T-cell (primary cell): ENCODE measurements at regions of chr11 and their contacts with region 1.

Region 1: DNA sequence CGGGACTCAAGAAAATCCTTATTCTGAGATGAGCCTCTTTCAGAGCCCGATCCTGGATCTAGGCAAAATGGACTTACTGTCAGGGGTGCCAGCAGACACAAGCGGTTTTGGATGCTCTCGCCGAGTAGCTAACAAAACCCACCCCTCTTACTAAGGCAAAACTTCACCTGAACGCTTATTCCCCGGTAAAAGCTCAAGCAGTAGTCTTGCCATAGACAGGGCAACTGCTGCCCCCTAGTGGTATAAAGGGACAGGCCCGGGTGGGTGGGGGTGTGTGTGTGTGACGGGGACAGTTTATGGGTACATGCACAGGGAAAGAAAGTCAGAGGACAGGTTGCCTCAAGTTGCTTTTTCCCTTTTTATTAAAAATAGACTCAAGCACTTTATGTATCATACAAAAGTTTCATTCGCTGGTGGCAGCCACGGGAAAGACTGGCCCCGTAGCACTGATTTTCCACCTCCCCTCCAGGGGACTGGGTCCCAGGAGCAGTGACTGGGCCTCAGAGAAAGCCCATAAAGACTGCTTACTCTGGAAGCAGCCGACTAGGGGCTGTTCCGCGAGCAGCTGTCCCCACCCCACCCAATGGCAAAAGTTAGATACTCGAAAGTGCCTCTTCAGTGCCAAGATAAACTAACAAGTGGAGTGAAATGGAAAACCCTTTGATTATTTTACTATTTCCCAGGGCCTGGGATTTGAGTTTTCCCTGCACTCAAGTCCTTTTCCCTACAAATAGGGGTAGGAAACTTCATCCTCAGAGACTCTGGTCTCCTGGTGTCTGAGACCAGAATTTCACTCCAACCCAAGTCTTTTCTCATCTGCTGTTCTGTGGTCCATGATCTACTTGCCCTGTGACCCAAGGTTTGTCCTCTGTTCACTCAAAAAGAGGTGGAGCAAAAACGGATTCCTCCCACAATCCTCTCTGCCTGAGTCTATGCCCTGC is 4.7 kb downstream of the YPEL4 start:
- DNase-seq: peak; percentile 67 to 90 (median 82)
- ATAC-seq: peak; percentile 67 to 77 (median 67)
- H3K4me3 ChIP-seq: no peak overlapping the region
- H3K4me3 Mint-ChIP-seq: no peak overlapping the region
- H3K27ac ChIP-seq: no peak overlapping the region
- H3K27ac Mint-ChIP-seq: no peak overlapping the region
- H3K4me1 ChIP-seq: peaks cover 29 to 40% of the 10 kb centered on the region in 2 experiments
- H3K4me1 Mint-ChIP-seq: peaks cover 35 to 45% (median 38%) of the 10 kb centered on the region in 3 donors
- H3K27me3 ChIP-seq: peaks cover 9 to 56% of the 10 kb centered on the region in 2 experiments
- H3K27me3 Mint-ChIP-seq: peaks cover 32 to 57% of the 10 kb centered on the region in 2 donors

Region 2: DNA sequence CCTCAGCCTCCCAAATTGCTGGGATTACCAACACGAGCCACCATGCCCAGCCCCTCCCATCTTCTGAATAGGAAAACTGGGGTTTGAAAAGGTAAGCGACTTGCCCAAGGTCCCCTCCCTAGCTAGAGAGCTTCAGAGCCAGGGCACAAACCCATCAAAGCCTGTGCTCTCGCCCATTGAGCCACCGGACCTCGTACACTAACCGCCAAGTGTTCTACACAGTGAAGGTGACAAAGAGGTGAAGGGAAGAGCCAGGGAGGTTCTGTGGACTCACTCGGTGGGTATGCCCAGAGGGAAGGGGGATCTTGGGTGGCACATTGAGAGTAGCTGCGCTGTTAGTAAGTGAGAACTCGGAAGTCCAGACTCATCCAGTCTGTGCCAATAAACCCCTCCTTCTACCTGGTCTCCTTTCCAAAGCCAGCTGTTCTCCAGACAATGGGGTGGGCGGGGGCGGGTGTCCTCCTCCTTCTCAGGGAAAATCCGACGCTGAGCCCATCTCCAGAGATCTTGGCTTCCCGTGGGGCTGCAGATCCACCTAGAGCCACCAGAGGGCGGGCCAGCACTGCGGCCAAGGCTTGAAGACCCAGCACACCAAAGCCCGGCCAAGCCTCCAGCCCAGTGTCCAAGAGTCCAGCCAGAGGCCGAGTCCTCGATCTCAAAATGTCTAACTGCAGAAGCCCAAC is 187.9 kb before region 1 on chr11:
- CTCF ChIA-PET with region 1: interaction called, 10 to 15 read pairs
- POLR2A ChIA-PET with region 1: interaction called in 1 of 2 experiments, 8 read pairs
- DNase-seq: peak in 34 of 35 experiments; percentile 28 to 84 (median 60)
- ATAC-seq: peak; percentile 45 to 70 (median 58)
- H3K4me3 ChIP-seq: no peak overlapping the region
- H3K4me3 Mint-ChIP-seq: peak overlapping the region; percentile 50 to 97 (median 61)
- H3K27ac ChIP-seq: no peak overlapping the region
- H3K27ac Mint-ChIP-seq: no peak overlapping the region
- H3K4me1 ChIP-seq: peaks cover 14 to 41% of the 10 kb centered on the region in 2 experiments
- H3K4me1 Mint-ChIP-seq: peaks cover 23 to 32% (median 31%) of the 10 kb centered on the region in 3 donors
- H3K27me3 ChIP-seq: peaks cover 4 to 65% of the 10 kb centered on the region in 2 experiments
- H3K27me3 Mint-ChIP-seq: peaks cover 33 to 38% of the 10 kb centered on the region in 2 donors

Region 3: GRCh38 chr11:57523419-57523818 is 121.6 kb before region 1 on chr11:
- CTCF ChIA-PET with region 1: interaction called, 5 to 13 read pairs
- POLR2A ChIA-PET with region 1: no interaction called
- DNase-seq: no peak
- ATAC-seq: no peak
- H3K4me3 ChIP-seq: no peak overlapping the region
- H3K4me3 Mint-ChIP-seq: no peak overlapping the region
- H3K27ac ChIP-seq: no peak overlapping the region
- H3K27ac Mint-ChIP-seq: no peak overlapping the region
- H3K4me1 ChIP-seq: peaks cover 0 to 3% of the 10 kb centered on the region in 2 experiments
- H3K4me1 Mint-ChIP-seq: peaks cover 9 to 14% (median 11%) of the 10 kb centered on the region in 3 donors
- H3K27me3 ChIP-seq: no peaks in the 10 kb centered on the region
- H3K27me3 Mint-ChIP-seq: no peaks in the 10 kb centered on the region

Region 4: DNA sequence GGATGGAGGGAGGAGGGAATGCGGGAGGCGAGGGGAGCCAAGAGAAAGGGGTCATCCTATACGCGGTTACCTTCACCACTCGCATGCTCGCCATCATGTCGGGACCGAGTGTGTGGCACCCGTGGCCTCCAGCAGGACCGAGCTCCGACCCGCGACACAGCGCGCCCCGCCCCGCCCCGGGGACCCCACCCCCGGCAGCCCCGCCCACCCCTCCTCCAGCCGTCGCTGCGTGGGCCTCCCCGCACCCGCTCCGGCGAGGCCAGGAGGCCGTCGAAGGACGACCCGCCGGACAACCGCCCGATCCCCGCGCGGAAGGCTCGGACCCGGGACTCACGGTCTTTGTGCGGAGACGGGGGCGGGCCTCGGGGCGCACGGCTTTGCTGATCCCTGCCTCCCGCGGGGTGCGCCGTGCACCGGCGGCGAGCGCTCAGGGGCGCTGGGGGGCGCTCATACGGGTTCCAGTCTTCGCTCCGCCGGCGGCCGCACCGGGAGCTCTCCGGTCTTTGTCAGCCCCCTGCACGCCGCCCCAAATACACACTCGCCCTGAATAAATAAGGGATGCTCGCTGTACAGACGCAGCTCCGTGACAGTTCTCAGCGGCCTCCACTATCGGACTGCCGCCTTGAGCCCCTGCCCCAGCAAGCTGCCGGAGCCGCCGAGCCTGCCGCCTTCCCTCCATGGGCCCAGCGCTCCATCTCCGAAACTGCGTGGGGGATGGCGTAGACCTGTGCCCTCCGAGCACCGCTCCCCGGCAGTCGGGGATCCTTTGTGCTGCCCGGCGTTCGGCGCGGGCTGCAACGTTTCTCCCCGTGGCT is 77.3 kb before region 1 on chr11 and contains the start of gene UBE2L6:
- CTCF ChIA-PET with region 1: interaction called, 46 to 51 read pairs
- POLR2A ChIA-PET with region 1: interaction called in 1 of 2 experiments, 3 read pairs
- DNase-seq: peak; percentile 36 to 91 (median 70)
- ATAC-seq: peak; percentile 74 to 80 (median 79)
- H3K4me3 ChIP-seq: peak within 1 kb of the TSS; percentile 83 to 100
- H3K4me3 Mint-ChIP-seq: peak within 1 kb of the TSS; percentile 94 to 100 (median 98)
- H3K27ac ChIP-seq: peak within 1 kb of the TSS; percentile 93
- H3K27ac Mint-ChIP-seq: peak within 1 kb of the TSS; percentile 99
- H3K4me1 ChIP-seq: peaks cover 13 to 43% of the 10 kb centered on the region in 2 experiments
- H3K4me1 Mint-ChIP-seq: peaks cover 47 to 65% (median 56%) of the 10 kb centered on the region in 3 donors
- H3K27me3 ChIP-seq: no peaks in the 10 kb centered on the region
- H3K27me3 Mint-ChIP-seq: no peaks in the 10 kb centered on the region
- total RNA-seq, gene UBE2L6: 61.7 to 97.2 (median 80.3) TPM

Region 5: GRCh38 chr11:57585301-57585700 is 59.7 kb before region 1 on chr11:
- CTCF ChIA-PET with region 1: no interaction called
- POLR2A ChIA-PET with region 1: no interaction called
- DNase-seq: no peak
- ATAC-seq: no peak
- H3K4me3 ChIP-seq: no peak overlapping the region
- H3K4me3 Mint-ChIP-seq: no peak overlapping the region
- H3K27ac ChIP-seq: no peak overlapping the region
- H3K27ac Mint-ChIP-seq: no peak overlapping the region
- H3K4me1 ChIP-seq: peaks cover 0 to 2% of the 10 kb centered on the region in 2 experiments
- H3K4me1 Mint-ChIP-seq: peaks cover 4 to 19% (median 4%) of the 10 kb centered on the region in 3 donors
- H3K27me3 ChIP-seq: peaks cover 0 to 5% of the 10 kb centered on the region in 2 experiments
- H3K27me3 Mint-ChIP-seq: peaks cover 0 to 2% of the 10 kb centered on the region in 2 donors

Region 6: DNA sequence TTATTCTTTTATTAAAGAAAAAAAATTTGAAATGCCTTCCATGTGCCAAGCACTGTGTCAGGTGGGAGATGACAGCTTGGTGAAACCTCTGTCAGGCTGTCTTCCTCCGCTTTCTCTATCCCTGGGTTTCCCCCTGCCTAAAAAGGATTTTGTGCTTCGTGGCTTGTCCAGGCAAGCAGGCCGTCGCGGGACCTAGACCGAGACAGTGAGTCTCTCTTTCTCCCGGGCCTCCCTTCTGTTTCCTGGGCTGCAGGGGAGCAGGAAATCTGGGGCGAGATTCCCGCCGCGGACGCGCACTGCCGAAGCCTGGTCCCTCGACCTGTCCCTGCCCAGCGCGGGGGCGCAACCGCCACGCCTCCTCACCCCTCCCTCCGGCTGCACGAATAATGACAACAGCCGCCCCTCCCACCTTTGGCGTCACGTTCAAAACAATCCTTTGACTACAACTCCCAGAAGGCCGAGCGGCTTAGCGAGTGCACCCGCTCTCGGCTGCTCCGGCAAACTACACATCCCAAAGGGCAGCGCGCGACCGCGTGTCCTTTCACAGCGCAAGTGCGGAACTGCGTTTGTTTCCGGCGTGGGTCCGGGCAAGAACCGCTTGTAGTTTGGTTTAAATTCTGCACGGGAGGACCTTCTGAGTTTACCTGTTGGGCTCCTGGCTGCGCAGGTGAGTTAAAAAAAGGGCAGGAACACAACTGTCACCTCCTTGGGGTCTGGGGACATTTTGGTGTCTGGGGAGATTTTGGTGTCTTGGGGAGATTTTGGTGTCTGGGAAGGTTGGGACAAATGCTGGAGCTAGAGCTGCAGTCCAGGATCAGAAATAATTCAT is 12.4 kb after region 1 on chr11 and contains the start of gene CLP1:
- CTCF ChIA-PET with region 1: interaction called, 8 to 16 read pairs
- POLR2A ChIA-PET with region 1: interaction called in 1 of 2 experiments, 4 read pairs
- DNase-seq: peak; percentile 96 to 100 (median 98)
- ATAC-seq: peak; percentile 96 to 99 (median 98)
- H3K4me3 ChIP-seq: peak within 1 kb of the TSS; percentile 70 to 91
- H3K4me3 Mint-ChIP-seq: peak within 1 kb of the TSS; percentile 87 to 99 (median 97)
- H3K27ac ChIP-seq: peak within 1 kb of the TSS; percentile 90
- H3K27ac Mint-ChIP-seq: peak within 1 kb of the TSS; percentile 95 to 97
- H3K4me1 ChIP-seq: peaks cover 5 to 27% of the 10 kb centered on the region in 2 experiments
- H3K4me1 Mint-ChIP-seq: peaks cover 38 to 48% (median 41%) of the 10 kb centered on the region in 3 donors
- H3K27me3 ChIP-seq: no peaks in the 10 kb centered on the region
- H3K27me3 Mint-ChIP-seq: no peaks in the 10 kb centered on the region
- total RNA-seq, gene CLP1: 14.3 to 16.0 (median 14.5) TPM

Region 7: DNA sequence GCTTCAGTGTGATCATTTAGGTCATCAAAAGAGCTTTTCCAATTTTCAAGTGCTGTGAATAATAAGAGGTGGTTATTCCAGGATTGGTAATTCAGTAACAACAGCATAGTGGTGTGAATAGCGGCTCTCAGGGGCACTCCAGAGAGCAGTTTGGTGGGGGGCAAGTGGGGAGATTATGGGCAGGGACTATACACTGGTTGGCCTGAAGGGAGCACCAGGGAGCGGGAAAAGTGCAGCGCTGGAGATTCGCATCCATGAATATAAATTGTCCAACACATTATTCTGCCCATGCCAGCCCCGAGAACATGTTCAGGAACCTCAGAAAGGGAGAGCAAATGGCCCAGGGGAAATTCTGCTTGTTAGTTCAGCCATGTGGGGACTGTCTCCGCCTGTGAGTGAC is 423.6 kb after region 1 on chr11:
- CTCF ChIA-PET with region 1: no interaction called
- POLR2A ChIA-PET with region 1: no interaction called
- DNase-seq: no peak
- ATAC-seq: no peak
- H3K4me3 ChIP-seq: no peak overlapping the region
- H3K4me3 Mint-ChIP-seq: no peak overlapping the region
- H3K27ac ChIP-seq: no peak overlapping the region
- H3K27ac Mint-ChIP-seq: no peak overlapping the region
- H3K4me1 ChIP-seq: no peaks in the 10 kb centered on the region
- H3K4me1 Mint-ChIP-seq: no peaks in the 10 kb centered on the region
- H3K27me3 ChIP-seq: peaks cover 0 to 18% of the 10 kb centered on the region in 2 experiments
- H3K27me3 Mint-ChIP-seq: peaks cover 4 to 5% of the 10 kb centered on the region in 2 donors

Region 8: GRCh38 chr11:58805065-58805464 is 1160.0 kb after region 1 on chr11:
- CTCF ChIA-PET with region 1: no interaction called
- POLR2A ChIA-PET with region 1: no interaction called
- DNase-seq: no peak
- ATAC-seq: no peak
- H3K4me3 ChIP-seq: no peak overlapping the region
- H3K4me3 Mint-ChIP-seq: no peak overlapping the region
- H3K27ac ChIP-seq: no peak overlapping the region
- H3K27ac Mint-ChIP-seq: no peak overlapping the region
- H3K4me1 ChIP-seq: no peaks in the 10 kb centered on the region
- H3K4me1 Mint-ChIP-seq: no peaks in the 10 kb centered on the region
- H3K27me3 ChIP-seq: no peaks in the 10 kb centered on the region
- H3K27me3 Mint-ChIP-seq: peaks cover 4 to 27% of the 10 kb centered on the region in 2 donors